ENCODE measurements at regions of chr12 and their contacts with region 1.

Region 1: DNA sequence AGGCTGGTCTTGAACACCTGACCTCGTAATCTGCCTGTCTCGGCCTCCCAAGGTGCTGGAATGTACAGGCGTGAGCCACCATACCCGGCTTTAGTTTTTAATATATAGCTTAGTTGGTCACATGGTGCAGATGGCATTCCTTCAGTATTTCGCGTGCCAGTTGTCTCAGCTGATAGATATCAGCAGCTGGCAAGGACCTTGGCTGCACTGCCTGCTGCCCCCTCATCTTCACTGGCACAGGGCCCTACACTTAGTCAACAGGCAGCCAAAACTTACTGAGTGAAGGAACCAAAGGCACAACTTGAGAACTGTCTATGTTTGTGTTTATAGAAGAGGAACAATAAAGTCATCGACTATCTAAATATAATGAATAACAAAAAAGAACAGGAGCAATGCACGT is 31.0 kb downstream of the EID3 start:
- DNase-seq: no peak
- H3K4me3 Mint-ChIP-seq: no peak overlapping the region
- H3K27ac Mint-ChIP-seq: no peak overlapping the region
- H3K4me1 Mint-ChIP-seq: no peaks in the 10 kb centered on the region
- H3K27me3 Mint-ChIP-seq: no peaks in the 10 kb centered on the region
- CTCF ChIP-seq: no peak

Region 2: DNA sequence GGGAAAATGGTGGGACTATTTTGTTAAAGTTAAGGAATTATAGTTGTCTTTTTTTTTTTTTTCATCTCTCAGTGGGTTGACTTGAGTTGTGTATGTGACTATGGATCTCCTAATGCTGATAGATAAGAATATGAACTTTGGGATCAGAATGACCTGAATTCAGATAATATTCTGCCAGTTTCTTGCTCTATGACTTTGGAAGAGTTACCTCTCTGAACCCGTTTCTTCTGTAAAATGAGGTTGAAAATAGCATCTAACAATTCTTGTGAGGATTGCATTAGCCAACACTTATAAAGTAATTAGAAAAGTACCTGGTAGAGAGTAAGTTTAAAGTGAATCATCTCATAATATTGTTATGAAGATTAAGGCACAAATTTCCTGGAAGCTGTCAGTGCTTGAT is 12.6 kb before region 1 on chr12:
- CTCF ChIA-PET with region 1: interaction called, 3 read pairs
- POLR2A ChIA-PET with region 1: interaction called, 3 read pairs
- intact Hi-C with region 1: loop called (anchors 1 kb)
- DNase-seq: no peak
- H3K4me3 Mint-ChIP-seq: no peak overlapping the region
- H3K27ac Mint-ChIP-seq: no peak overlapping the region
- H3K4me1 Mint-ChIP-seq: no peaks in the 10 kb centered on the region
- H3K27me3 Mint-ChIP-seq: no peaks in the 10 kb centered on the region
- CTCF ChIP-seq: no peak

Region 3: GRCh38 chr12:104439137-104439536 is 104.6 kb after region 1 on chr12:
- CTCF ChIA-PET with region 1: no interaction called
- POLR2A ChIA-PET with region 1: no interaction called
- intact Hi-C with region 1: no loop called
- DNase-seq: no peak
- H3K4me3 Mint-ChIP-seq: no peak overlapping the region
- H3K27ac Mint-ChIP-seq: no peak overlapping the region
- H3K4me1 Mint-ChIP-seq: no peaks in the 10 kb centered on the region
- H3K27me3 Mint-ChIP-seq: peaks cover 12% of the 10 kb centered on the region
- CTCF ChIP-seq: no peak

Measured in MCF 10A (cell line).